ENCODE measurements at regions of chr3 and their contacts with region 1.

Region 1: GRCh38 chr3:187025656-187026316 is 95.5 kb downstream of the ST6GAL1 start:
- DNase-seq: peak in 9 of 14 experiments; percentile 28 to 64 (median 38)
- ATAC-seq: peak; percentile 2
- H3K4me3 ChIP-seq: peak overlapping the region; percentile 72
- H3K4me3 Mint-ChIP-seq: peak overlapping the region; percentile 89
- H3K27ac ChIP-seq: peak overlapping the region; percentile 72 to 87
- H3K27ac Mint-ChIP-seq: peak overlapping the region; percentile 98
- H3K4me1 ChIP-seq: peaks cover 62% of the 10 kb centered on the region
- H3K4me1 Mint-ChIP-seq: peaks cover 69% of the 10 kb centered on the region
- H3K27me3 ChIP-seq: no peaks in the 10 kb centered on the region
- H3K27me3 Mint-ChIP-seq: no peaks in the 10 kb centered on the region
- CTCF ChIP-seq: no peak

Region 2: GRCh38 chr3:185527364-185527763 is 1498.4 kb before region 1 on chr3:
- CTCF ChIA-PET with region 1: no interaction called
- POLR2A ChIA-PET with region 1: no interaction called
- intact Hi-C with region 1: no loop called
- DNase-seq: no peak
- ATAC-seq: no peak
- H3K4me3 ChIP-seq: no peak overlapping the region
- H3K4me3 Mint-ChIP-seq: no peak overlapping the region
- H3K27ac ChIP-seq: no peak overlapping the region
- H3K27ac Mint-ChIP-seq: no peak overlapping the region
- H3K4me1 ChIP-seq: no peaks in the 10 kb centered on the region
- H3K4me1 Mint-ChIP-seq: no peaks in the 10 kb centered on the region
- H3K27me3 ChIP-seq: no peaks in the 10 kb centered on the region
- H3K27me3 Mint-ChIP-seq: peaks cover 22% of the 10 kb centered on the region
- CTCF ChIP-seq: no peak

Region 3: GRCh38 chr3:186609247-186609868 is 416.4 kb before region 1 on chr3:
- CTCF ChIA-PET with region 1: no interaction called
- POLR2A ChIA-PET with region 1: no interaction called
- intact Hi-C with region 1: no loop called
- DNase-seq: no peak
- ATAC-seq: no peak
- H3K4me3 ChIP-seq: no peak overlapping the region
- H3K4me3 Mint-ChIP-seq: no peak overlapping the region
- H3K27ac ChIP-seq: no peak overlapping the region
- H3K27ac Mint-ChIP-seq: no peak overlapping the region
- H3K4me1 ChIP-seq: peaks cover 3% of the 10 kb centered on the region
- H3K4me1 Mint-ChIP-seq: peaks cover 2% of the 10 kb centered on the region
- H3K27me3 ChIP-seq: no peaks in the 10 kb centered on the region
- H3K27me3 Mint-ChIP-seq: no peaks in the 10 kb centered on the region
- CTCF ChIP-seq: no peak

Region 4: GRCh38 chr3:186826976-186827731 is 198.6 kb before region 1 on chr3:
- CTCF ChIA-PET with region 1: no interaction called
- POLR2A ChIA-PET with region 1: interaction called, 10 read pairs
- intact Hi-C with region 1: no loop called
- DNase-seq: peak; percentile 68 to 96 (median 82)
- ATAC-seq: peak; percentile 92
- H3K4me3 ChIP-seq: peak overlapping the region; percentile 60
- H3K4me3 Mint-ChIP-seq: peak overlapping the region; percentile 76
- H3K27ac ChIP-seq: no peak overlapping the region
- H3K27ac Mint-ChIP-seq: no peak overlapping the region
- H3K4me1 ChIP-seq: peaks cover 27% of the 10 kb centered on the region
- H3K4me1 Mint-ChIP-seq: peaks cover 23% of the 10 kb centered on the region
- H3K27me3 ChIP-seq: peaks cover 37 to 65% of the 10 kb centered on the region in 2 experiments
- H3K27me3 Mint-ChIP-seq: peaks cover 65% of the 10 kb centered on the region
- CTCF ChIP-seq: no peak

Region 5: DNA sequence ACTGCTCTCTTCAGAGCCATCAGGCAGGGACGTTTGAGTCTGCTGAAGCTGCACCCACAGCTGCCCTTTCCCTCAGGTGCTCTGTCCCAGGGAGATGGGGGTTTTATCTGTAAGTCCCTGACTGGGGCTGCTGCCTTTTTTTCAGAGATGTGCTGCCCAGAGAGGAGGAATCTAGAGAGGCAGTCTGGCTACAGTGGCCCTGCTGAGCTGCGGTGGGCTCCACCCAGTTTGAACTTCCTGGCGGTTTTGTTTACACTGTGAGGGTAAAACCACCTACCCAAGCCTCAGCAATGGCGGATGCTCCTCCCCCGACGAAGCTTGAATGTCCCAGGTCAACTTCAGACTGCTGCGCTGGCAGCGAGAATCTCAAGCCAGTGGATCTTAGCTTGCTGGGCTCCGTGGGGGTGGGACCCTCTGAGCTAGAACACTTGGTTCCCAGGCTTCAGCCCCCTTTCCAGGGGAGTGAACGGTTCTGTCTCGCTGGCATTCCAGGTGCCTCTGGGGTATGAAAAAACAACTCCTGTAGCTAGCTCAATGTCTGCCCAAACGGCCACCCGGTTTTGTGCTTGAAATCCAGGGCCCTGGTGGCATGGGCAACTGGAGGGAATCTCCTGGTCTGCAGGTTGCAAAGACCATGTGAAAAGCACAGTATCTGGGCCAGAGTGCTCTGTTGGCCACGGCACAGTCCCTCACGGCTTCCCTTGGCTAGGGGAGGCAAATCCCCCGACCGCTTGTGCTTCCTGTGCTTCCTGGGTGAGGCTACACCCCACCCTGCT is 116.5 kb before region 1 on chr3:
- CTCF ChIA-PET with region 1: no interaction called
- POLR2A ChIA-PET with region 1: interaction called, 28 read pairs
- intact Hi-C with region 1: no loop called
- DNase-seq: peak; percentile 68 to 93 (median 82)
- ATAC-seq: peak; percentile 93
- H3K4me3 ChIP-seq: peak overlapping the region; percentile 33
- H3K4me3 Mint-ChIP-seq: peak overlapping the region; percentile 81
- H3K27ac ChIP-seq: peak overlapping the region; percentile 64 to 69
- H3K27ac Mint-ChIP-seq: peak overlapping the region; percentile 98
- H3K4me1 ChIP-seq: peaks cover 29% of the 10 kb centered on the region
- H3K4me1 Mint-ChIP-seq: peaks cover 44% of the 10 kb centered on the region
- H3K27me3 ChIP-seq: no peaks in the 10 kb centered on the region
- H3K27me3 Mint-ChIP-seq: no peaks in the 10 kb centered on the region
- CTCF ChIP-seq: no peak

Region 6: GRCh38 chr3:187006864-187007630 is 18.7 kb before region 1 on chr3:
- CTCF ChIA-PET with region 1: interaction called, 5 read pairs
- POLR2A ChIA-PET with region 1: interaction called, 47 read pairs
- intact Hi-C with region 1: loop called in 1 of 2 experiments (anchors 2 kb)
- DNase-seq: peak in 2 of 14 experiments; percentile 40 to 67
- ATAC-seq: peak; percentile 74
- H3K4me3 ChIP-seq: no peak overlapping the region
- H3K4me3 Mint-ChIP-seq: peak overlapping the region; percentile 8
- H3K27ac ChIP-seq: peak overlapping the region in 1 of 2 donors; percentile 45
- H3K27ac Mint-ChIP-seq: peak overlapping the region; percentile 72
- H3K4me1 ChIP-seq: peaks cover 42% of the 10 kb centered on the region
- H3K4me1 Mint-ChIP-seq: peaks cover 65% of the 10 kb centered on the region
- H3K27me3 ChIP-seq: no peaks in the 10 kb centered on the region
- H3K27me3 Mint-ChIP-seq: no peaks in the 10 kb centered on the region
- CTCF ChIP-seq: no peak

Region 7: GRCh38 chr3:187066228-187066995 is 40.6 kb after region 1 on chr3:
- CTCF ChIA-PET with region 1: interaction called, 9 read pairs
- POLR2A ChIA-PET with region 1: interaction called, 11 read pairs
- intact Hi-C with region 1: loop called in 1 of 2 experiments (anchors 1 kb)
- DNase-seq: peak in 13 of 14 experiments; percentile 31 to 78 (median 45)
- ATAC-seq: peak; percentile 91
- H3K4me3 ChIP-seq: no peak overlapping the region
- H3K4me3 Mint-ChIP-seq: peak overlapping the region; percentile 12
- H3K27ac ChIP-seq: no peak overlapping the region
- H3K27ac Mint-ChIP-seq: peak overlapping the region; percentile 86
- H3K4me1 ChIP-seq: peaks cover 45% of the 10 kb centered on the region
- H3K4me1 Mint-ChIP-seq: peaks cover 74% of the 10 kb centered on the region
- H3K27me3 ChIP-seq: no peaks in the 10 kb centered on the region
- H3K27me3 Mint-ChIP-seq: no peaks in the 10 kb centered on the region
- CTCF ChIP-seq: peak; percentile 38

Region 8: DNA sequence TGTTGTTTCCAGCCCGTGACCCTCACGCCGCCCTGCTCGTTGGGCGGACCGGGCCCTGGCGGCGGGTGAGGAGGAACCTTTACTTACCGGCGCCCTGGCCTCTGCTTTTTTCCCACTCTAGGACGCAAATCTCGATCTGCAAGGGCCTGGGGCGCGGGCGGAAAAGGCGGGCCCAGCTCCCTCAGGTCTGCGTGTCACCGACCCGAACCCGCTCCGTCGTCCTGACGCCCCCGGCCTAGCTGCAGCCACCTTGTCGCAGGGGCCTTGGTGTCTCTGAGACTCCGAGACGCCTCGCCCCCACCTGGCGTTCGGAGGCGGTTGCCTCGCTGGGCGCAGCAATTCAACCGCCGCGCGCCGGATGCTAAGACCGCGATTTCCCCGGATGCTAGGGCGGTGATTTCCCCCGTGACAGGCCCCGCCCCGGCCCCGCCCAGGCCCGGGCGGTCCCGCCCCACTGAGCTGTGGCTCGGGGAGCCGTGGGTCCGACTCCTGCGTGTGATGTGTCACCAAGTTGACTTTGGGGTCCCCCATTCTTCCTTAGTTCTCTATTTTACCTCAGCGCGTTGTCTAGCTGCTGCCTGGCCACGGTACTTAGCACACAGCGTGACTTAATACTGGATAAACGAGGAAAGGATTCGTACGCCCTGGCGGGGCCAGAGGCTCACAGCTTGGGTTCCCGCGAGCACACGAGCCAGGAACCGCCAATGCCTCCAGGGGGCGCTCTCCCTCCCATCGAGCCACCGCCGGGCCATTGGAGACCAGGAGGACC is 113.5 kb after region 1 on chr3 and contains the start of gene RPL39L:
- CTCF ChIA-PET with region 1: interaction called, 6 read pairs
- POLR2A ChIA-PET with region 1: interaction called, 44 read pairs
- intact Hi-C with region 1: no loop called
- DNase-seq: peak; percentile 85 to 97 (median 90)
- ATAC-seq: peak; percentile 95
- H3K4me3 ChIP-seq: peak within 1 kb of the TSS; percentile 69
- H3K4me3 Mint-ChIP-seq: peak within 1 kb of the TSS; percentile 90
- H3K27ac ChIP-seq: peak within 1 kb of the TSS; percentile 81 to 85
- H3K27ac Mint-ChIP-seq: peak within 1 kb of the TSS; percentile 93
- H3K4me1 ChIP-seq: peaks cover 16% of the 10 kb centered on the region
- H3K4me1 Mint-ChIP-seq: peaks cover 16% of the 10 kb centered on the region
- H3K27me3 ChIP-seq: no peaks in the 10 kb centered on the region
- H3K27me3 Mint-ChIP-seq: no peaks in the 10 kb centered on the region
- CTCF ChIP-seq: peak; percentile 97
- total RNA-seq, gene RPL39L: 1.1 to 1.7 TPM